IMR-90 (cell line): ENCODE measurements at regions of chr20 and their contacts with region 1.

Region 1: GRCh38 chr20:54199721-54200176 is 8.1 kb upstream of the PFDN4 start:
- DNase-seq: peak; percentile 73
- ATAC-seq: peak; percentile 90
- H3K4me3 ChIP-seq: no peak overlapping the region
- H3K27ac ChIP-seq: no peak overlapping the region
- H3K4me1 ChIP-seq: no peaks in the 10 kb centered on the region
- H3K27me3 ChIP-seq: peaks cover 10% of the 10 kb centered on the region; the same call in 1 of the 2 replicates
- CTCF ChIP-seq: peak; percentile 99
- POLR2A ChIP-seq: no peak; the same call in 1 of the 2 replicates
- RAD21 ChIP-seq: peak; percentile 98

Region 2: GRCh38 chr20:53578492-53579222 is 621.1 kb before region 1 on chr20:
- CTCF ChIA-PET with region 1: no interaction called
- POLR2A ChIA-PET with region 1: no interaction called
- dilution Hi-C with region 1: no loop called
- in situ Hi-C with region 1: loop called (anchors 10 kb)
- intact Hi-C with region 1: loop called (anchors 5 kb)
- DNase-seq: peak; percentile 89
- ATAC-seq: peak; percentile 64
- H3K4me3 ChIP-seq: no peak overlapping the region
- H3K27ac ChIP-seq: peak overlapping the region; percentile 60
- H3K4me1 ChIP-seq: peaks cover 18% of the 10 kb centered on the region
- H3K27me3 ChIP-seq: no peaks in the 10 kb centered on the region
- CTCF ChIP-seq: peak; percentile 96
- POLR2A ChIP-seq: peak; percentile 39; the same call in 1 of the 2 replicates
- RAD21 ChIP-seq: peak; percentile 90

Region 3: GRCh38 chr20:53984356-53985149 is 215.2 kb before region 1 on chr20:
- CTCF ChIA-PET with region 1: no interaction called
- POLR2A ChIA-PET with region 1: no interaction called
- dilution Hi-C with region 1: no loop called
- in situ Hi-C with region 1: loop called (anchors 25 kb)
- intact Hi-C with region 1: no loop called
- DNase-seq: no peak
- ATAC-seq: no peak
- H3K4me3 ChIP-seq: no peak overlapping the region
- H3K27ac ChIP-seq: no peak overlapping the region
- H3K4me1 ChIP-seq: no peaks in the 10 kb centered on the region
- H3K27me3 ChIP-seq: peaks cover 4% of the 10 kb centered on the region
- CTCF ChIP-seq: no peak
- POLR2A ChIP-seq: no peak
- RAD21 ChIP-seq: no peak

Region 4: DNA sequence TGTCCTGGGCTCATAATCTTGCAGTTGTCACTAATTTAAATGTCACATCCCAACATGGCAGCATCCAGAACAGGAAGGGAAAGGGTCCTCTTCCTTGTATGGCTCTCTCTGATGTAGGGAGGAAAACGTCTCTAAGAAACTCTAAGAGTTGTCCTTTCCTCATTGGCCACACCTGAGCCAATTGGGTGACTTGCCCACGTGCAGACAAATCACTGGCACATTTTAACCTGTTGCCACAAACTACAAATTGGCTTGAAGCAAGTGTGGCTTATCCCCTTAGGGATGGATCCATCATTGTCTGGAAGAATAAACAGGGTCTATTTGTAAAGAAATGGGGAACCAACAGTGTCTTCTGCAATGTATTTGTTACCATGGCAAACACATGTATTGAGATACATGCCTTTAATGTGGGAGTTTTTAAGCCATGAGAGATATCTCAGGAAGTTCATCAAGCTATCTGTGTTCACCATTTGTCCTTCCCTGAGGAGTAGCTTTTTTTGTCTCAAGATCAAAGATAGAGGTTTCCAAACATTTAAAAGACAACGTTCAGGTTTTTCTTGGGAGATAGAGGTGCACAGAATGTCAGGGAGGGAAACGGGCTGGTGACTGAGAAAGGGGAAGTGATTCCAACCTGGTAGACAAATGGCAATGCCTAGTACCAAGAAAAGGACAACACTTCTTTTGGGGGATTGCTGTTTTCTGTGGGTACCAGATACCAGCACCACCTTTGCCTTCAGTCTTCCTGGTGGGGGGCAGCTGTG is 109.5 kb before region 1 on chr20:
- CTCF ChIA-PET with region 1: interaction called, 14 read pairs
- POLR2A ChIA-PET with region 1: interaction called, 3 read pairs
- dilution Hi-C with region 1: loop called (anchors 25 kb)
- in situ Hi-C with region 1: no loop called
- intact Hi-C with region 1: no loop called
- DNase-seq: no peak
- ATAC-seq: no peak
- H3K4me3 ChIP-seq: no peak overlapping the region
- H3K27ac ChIP-seq: no peak overlapping the region
- H3K4me1 ChIP-seq: no peaks in the 10 kb centered on the region
- H3K27me3 ChIP-seq: peaks cover 9% of the 10 kb centered on the region
- CTCF ChIP-seq: no peak
- POLR2A ChIP-seq: no peak
- RAD21 ChIP-seq: no peak

Region 5: GRCh38 chr20:54103067-54103761 is 96.5 kb before region 1 on chr20:
- CTCF ChIA-PET with region 1: interaction called, 66 read pairs
- POLR2A ChIA-PET with region 1: no interaction called
- dilution Hi-C with region 1: loop called (anchors 25 kb)
- in situ Hi-C with region 1: loop called (anchors 5 kb)
- intact Hi-C with region 1: no loop called
- DNase-seq: peak; percentile 64
- ATAC-seq: peak; percentile 86
- H3K4me3 ChIP-seq: no peak overlapping the region
- H3K27ac ChIP-seq: no peak overlapping the region
- H3K4me1 ChIP-seq: no peaks in the 10 kb centered on the region
- H3K27me3 ChIP-seq: peaks cover 2% of the 10 kb centered on the region; the same call in 1 of the 2 replicates
- CTCF ChIP-seq: peak; percentile 89
- POLR2A ChIP-seq: no peak
- RAD21 ChIP-seq: peak; percentile 77